Dendritic cell treated with granulocyte-macrophage colony-stimulating factor and Interleukin-4, amounts not matched to agents 40 ng/mL and 50 ng/mL, for 4 days (primary cell): ENCODE measurements at regions of chr22 and their contacts with region 1.

Region 1: DNA sequence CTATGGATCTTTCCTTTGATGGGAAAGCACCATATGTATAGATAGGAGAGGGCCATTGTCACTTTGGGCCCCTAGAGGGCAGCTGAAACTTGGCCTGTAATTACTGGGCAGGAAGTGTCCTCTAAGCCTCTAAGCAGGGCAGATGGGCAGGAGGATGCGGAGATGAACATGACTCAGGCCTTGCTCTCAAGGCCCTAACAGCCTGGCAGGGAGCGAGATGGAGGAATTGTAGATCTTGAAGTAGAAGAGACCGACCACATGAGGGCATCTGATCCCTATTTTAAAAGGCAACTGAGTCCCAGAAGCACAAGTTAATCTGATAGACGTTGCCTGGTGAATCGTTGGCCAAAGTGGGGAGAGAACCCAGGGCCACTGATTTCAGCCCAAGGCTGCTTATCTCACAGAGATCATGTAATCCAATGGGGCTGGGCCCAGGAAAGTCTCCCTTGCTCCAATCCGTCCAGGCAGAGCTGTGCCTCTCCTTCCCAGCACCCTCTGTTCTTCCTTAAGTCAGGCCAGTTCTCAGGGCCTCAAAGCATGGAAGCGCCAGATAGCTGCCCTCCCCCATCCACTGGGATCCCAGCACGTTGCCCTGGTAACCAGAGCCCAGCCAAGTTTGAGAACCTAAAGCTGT is 2.5 kb upstream of the SEPTIN3 start:
- H3K4me3 Mint-ChIP-seq: no peak overlapping the region
- H3K27ac Mint-ChIP-seq: peak overlapping the region; percentile 49
- H3K4me1 Mint-ChIP-seq: peaks cover 8% of the 10 kb centered on the region
- H3K27me3 Mint-ChIP-seq: peaks cover 18% of the 10 kb centered on the region

Region 2: GRCh38 chr22:41910050-41911000 is 56.4 kb before region 1 on chr22:
- intact Hi-C with region 1: no loop called
- H3K4me3 Mint-ChIP-seq: peak overlapping the region; percentile 44
- H3K27ac Mint-ChIP-seq: no peak overlapping the region
- H3K4me1 Mint-ChIP-seq: peaks cover 44% of the 10 kb centered on the region
- H3K27me3 Mint-ChIP-seq: peaks cover 59% of the 10 kb centered on the region

Region 3: GRCh38 chr22:42070517-42071422 is 104.0 kb after region 1 on chr22 and contains the start of gene NAGA:
- intact Hi-C with region 1: loop called (anchors 2 kb)
- H3K4me3 Mint-ChIP-seq: peak within 1 kb of the TSS; percentile 82
- H3K27ac Mint-ChIP-seq: peak within 1 kb of the TSS; percentile 96
- H3K4me1 Mint-ChIP-seq: peaks cover 76% of the 10 kb centered on the region
- H3K27me3 Mint-ChIP-seq: no peaks in the 10 kb centered on the region

Region 4: GRCh38 chr22:42079319-42080251 is 112.9 kb after region 1 on chr22 and contains the start of gene SMDT1:
- intact Hi-C with region 1: loop called (anchors 2 kb)
- H3K4me3 Mint-ChIP-seq: peak within 1 kb of the TSS; percentile 85
- H3K27ac Mint-ChIP-seq: peak within 1 kb of the TSS; percentile 98
- H3K4me1 Mint-ChIP-seq: peaks cover 60% of the 10 kb centered on the region
- H3K27me3 Mint-ChIP-seq: no peaks in the 10 kb centered on the region

Region 5: DNA sequence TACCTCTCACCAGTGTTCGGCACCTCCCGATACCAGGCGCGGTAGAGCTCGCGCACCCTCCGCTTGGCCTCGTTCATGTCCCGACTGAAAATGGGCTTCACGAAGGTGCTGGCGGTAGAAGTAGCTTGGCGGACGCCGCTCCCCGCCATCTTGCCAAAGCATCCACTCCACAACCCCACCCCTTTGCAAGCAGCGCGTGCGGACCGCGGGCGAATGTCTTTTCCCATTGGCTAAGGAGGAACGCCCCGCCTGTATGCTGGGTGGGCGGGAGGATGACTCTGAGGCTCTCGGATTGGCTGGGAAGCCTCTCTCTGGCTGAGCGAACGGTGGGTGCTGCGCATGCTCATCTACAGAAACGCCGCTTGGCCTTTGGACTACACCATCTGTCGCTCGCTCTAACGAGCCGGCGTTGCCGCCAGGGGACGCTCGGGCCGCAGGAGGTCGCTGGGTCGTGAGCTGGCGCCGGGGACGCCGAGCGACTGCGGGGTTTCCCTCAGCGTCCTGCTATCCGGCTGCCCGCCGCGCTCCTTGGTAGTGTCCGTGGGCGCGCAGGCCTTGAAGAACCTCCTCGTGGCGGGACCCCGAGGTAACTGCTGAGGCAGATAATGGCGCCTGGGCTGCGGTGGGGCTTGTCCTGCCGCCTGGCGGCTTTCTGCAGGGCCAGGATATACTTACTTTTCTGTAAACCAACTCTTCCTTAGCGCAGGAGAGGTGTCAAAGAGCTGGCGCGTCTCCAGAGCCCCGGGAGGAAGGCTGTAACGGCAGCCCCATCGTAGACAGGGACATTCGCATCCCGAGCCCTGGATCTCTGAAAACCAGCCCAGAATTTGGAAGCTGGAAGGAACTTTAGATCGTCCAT is 124.1 kb after region 1 on chr22 and contains the start of gene NDUFA6:
- intact Hi-C with region 1: loop called (anchors 5 kb)
- H3K4me3 Mint-ChIP-seq: peak within 1 kb of the TSS; percentile 98
- H3K27ac Mint-ChIP-seq: peak within 1 kb of the TSS; percentile 100
- H3K4me1 Mint-ChIP-seq: peaks cover 23% of the 10 kb centered on the region
- H3K27me3 Mint-ChIP-seq: no peaks in the 10 kb centered on the region

Region 6: DNA sequence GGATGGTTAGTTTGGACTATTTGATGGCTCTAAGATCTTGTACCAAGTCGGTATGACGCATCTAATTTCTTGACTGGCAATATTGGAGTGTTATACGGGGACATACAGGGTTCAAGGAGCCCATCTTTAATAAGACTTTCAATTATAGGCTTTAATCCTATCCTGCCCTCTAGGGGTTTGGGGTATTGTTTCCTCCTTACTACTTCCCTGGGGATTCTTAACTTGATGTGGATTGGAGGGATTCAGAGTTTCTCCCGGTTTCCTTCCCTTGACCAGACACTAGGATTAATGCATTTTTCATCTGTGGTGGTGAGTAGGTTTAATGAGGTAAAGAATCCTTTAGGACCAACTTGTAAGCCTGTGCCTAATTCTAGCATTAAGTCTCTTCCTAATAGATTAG is 145.1 kb after region 1 on chr22:
- intact Hi-C with region 1: loop called (anchors 2 kb)
- H3K4me3 Mint-ChIP-seq: no peak overlapping the region
- H3K27ac Mint-ChIP-seq: no peak overlapping the region
- H3K4me1 Mint-ChIP-seq: no peaks in the 10 kb centered on the region
- H3K27me3 Mint-ChIP-seq: no peaks in the 10 kb centered on the region

Region 7: GRCh38 chr22:42473484-42474193 is 506.9 kb after region 1 on chr22:
- intact Hi-C with region 1: loop called (anchors 10 kb)
- H3K4me3 Mint-ChIP-seq: no peak overlapping the region
- H3K27ac Mint-ChIP-seq: no peak overlapping the region
- H3K4me1 Mint-ChIP-seq: no peaks in the 10 kb centered on the region
- H3K27me3 Mint-ChIP-seq: peaks cover 13% of the 10 kb centered on the region